PC-9 (cell line): ENCODE measurements at regions of chr15 and their contacts with region 1.

Region 1: GRCh38 chr15:34969340-34970097 is at the start of gene AQR:
- DNase-seq: peak; percentile 93
- H3K4me3 ChIP-seq: peak within 1 kb of the TSS; percentile 77
- H3K27ac ChIP-seq: 0 out of 2 replicates have a peak within 1 kb of the TSS, but pooled peaks have one; percentile 25
- H3K4me1 ChIP-seq: peaks cover 9% of the 10 kb centered on the region; the same call in 1 of the 2 replicates
- H3K27me3 ChIP-seq: no peaks in the 10 kb centered on the region
- CTCF ChIP-seq: peak; percentile 56
- total RNA-seq, gene AQR: 24.1 and 33.6 TPM in 2 replicates

Region 2: GRCh38 chr15:34650177-34650576 is 319.3 kb before region 1 on chr15:
- CTCF ChIA-PET with region 1: no interaction called
- POLR2A ChIA-PET with region 1: no interaction called
- intact Hi-C with region 1: no loop called
- DNase-seq: no peak
- H3K4me3 ChIP-seq: no peak overlapping the region
- H3K27ac ChIP-seq: no peak overlapping the region
- H3K4me1 ChIP-seq: no peaks in the 10 kb centered on the region
- H3K27me3 ChIP-seq: no peaks in the 10 kb centered on the region
- CTCF ChIP-seq: no peak

Region 3: DNA sequence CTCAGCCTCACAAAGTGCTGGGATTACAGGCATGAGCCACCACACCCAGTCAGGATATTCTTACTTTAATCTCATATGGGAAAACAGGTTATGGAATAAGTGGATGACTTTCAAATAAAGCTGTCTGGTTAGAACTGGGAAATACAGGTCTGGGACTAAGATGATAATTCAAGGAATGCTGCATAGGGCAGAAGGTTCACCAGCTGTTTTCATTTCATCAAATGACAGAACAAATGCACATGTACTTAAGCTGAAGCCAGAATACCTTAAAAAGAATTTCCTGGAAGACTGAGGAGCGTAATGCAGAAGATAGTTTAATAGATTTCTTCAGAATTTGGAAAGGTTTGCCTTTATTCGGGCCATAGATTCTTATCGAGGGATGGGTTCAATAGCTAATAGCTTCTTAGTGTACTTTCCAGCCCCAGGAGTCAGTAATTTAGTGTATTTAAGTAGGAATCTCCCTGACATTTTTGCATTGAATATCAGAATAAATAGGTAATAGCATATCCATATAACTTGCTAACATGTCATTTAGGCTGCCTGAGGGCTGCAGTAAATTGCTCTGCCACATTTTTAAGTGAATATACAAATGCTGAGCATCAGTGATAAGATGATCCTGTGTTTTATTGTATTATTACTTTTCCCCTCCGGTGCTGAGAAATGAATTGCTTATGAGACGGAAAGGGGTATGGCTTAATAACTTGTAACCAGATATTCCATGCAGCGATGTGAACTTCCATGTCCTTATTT is 58.9 kb after region 1 on chr15:
- CTCF ChIA-PET with region 1: no interaction called
- POLR2A ChIA-PET with region 1: no interaction called
- intact Hi-C with region 1: no loop called
- DNase-seq: no peak
- H3K4me3 ChIP-seq: no peak overlapping the region
- H3K27ac ChIP-seq: no peak overlapping the region
- H3K4me1 ChIP-seq: peaks cover 8% of the 10 kb centered on the region
- H3K27me3 ChIP-seq: no peaks in the 10 kb centered on the region
- CTCF ChIP-seq: no peak

Region 4: GRCh38 chr15:35115155-35115725 is 145.7 kb after region 1 on chr15:
- CTCF ChIA-PET with region 1: no interaction called
- POLR2A ChIA-PET with region 1: no interaction called
- intact Hi-C with region 1: no loop called
- DNase-seq: no peak
- H3K4me3 ChIP-seq: no peak overlapping the region
- H3K27ac ChIP-seq: no peak overlapping the region
- H3K4me1 ChIP-seq: no peaks in the 10 kb centered on the region
- H3K27me3 ChIP-seq: no peaks in the 10 kb centered on the region
- CTCF ChIP-seq: no peak

Region 5: GRCh38 chr15:35173444-35174118 is 204.1 kb after region 1 on chr15:
- CTCF ChIA-PET with region 1: no interaction called
- POLR2A ChIA-PET with region 1: interaction called, 10 read pairs
- intact Hi-C with region 1: no loop called
- DNase-seq: no peak
- H3K4me3 ChIP-seq: no peak overlapping the region
- H3K27ac ChIP-seq: no peak overlapping the region
- H3K4me1 ChIP-seq: no peaks in the 10 kb centered on the region; the same call in 1 of the 2 replicates
- H3K27me3 ChIP-seq: no peaks in the 10 kb centered on the region
- CTCF ChIP-seq: no peak

Region 6: GRCh38 chr15:35430301-35430700 is 460.8 kb after region 1 on chr15:
- CTCF ChIA-PET with region 1: no interaction called
- POLR2A ChIA-PET with region 1: interaction called, 13 read pairs
- intact Hi-C with region 1: no loop called
- DNase-seq: peak in 1 of 2 experiments; percentile 50
- H3K4me3 ChIP-seq: no peak overlapping the region
- H3K27ac ChIP-seq: no peak overlapping the region
- H3K4me1 ChIP-seq: no peaks in the 10 kb centered on the region; the same call in 1 of the 2 replicates
- H3K27me3 ChIP-seq: no peaks in the 10 kb centered on the region
- CTCF ChIP-seq: no peak